ENCODE measurements at regions of chr6 and their contacts with region 1.

Region 1: DNA sequence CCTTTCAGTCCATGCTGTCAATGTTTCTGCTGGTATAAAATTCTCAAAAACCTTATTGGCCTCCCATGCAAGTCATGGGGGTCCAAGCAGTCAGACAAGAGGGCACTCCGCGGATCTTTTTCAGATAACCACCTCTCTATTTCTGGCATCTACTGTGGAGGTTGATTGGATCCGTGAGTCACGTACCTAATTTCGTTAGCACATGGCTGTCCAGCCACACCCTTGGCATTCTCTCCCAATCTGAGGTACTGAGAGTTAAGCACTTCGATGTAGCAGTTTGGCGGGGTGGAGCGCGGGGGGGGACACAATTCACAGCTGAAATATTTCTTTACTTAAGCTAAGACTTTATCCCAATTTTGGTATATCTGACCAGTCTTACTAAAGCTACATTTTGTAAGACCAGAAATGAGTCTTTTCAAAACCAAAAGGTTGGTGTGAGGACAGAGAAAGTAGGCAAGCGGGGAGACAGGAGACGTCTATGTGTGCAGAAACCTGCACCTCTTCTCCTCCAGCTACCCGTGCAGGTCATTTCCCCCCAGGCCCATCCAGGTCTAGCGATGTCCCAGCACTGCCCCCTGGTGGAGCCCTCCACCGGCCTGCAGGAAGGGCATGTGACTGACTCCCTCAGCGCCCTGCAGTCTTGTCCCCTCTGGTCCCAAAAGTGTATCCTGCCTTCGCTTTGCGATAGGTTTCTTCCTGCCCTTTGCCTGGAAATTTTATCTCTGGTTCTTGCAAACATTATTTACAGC is 113.1 kb downstream of the ADAT2 start:
- DNase-seq: peak; percentile 93
- H3K4me3 Mint-ChIP-seq: peak overlapping the region; percentile 46
- H3K27ac Mint-ChIP-seq: peak overlapping the region; percentile 99
- H3K4me1 Mint-ChIP-seq: peaks cover 40% of the 10 kb centered on the region
- H3K27me3 Mint-ChIP-seq: no peaks in the 10 kb centered on the region
- CTCF ChIP-seq: peak; percentile 86

Region 2: GRCh38 chr6:142692942-142693341 is 644.4 kb before region 1 on chr6:
- CTCF ChIA-PET with region 1: interaction called, 3 read pairs
- POLR2A ChIA-PET with region 1: interaction called, 6 read pairs
- intact Hi-C with region 1: loop called (anchors 1 kb)
- DNase-seq: peak; percentile 82
- H3K4me3 Mint-ChIP-seq: no peak overlapping the region
- H3K27ac Mint-ChIP-seq: no peak overlapping the region
- H3K4me1 Mint-ChIP-seq: peaks cover 43% of the 10 kb centered on the region
- H3K27me3 Mint-ChIP-seq: no peaks in the 10 kb centered on the region
- CTCF ChIP-seq: peak; percentile 85

Region 3: DNA sequence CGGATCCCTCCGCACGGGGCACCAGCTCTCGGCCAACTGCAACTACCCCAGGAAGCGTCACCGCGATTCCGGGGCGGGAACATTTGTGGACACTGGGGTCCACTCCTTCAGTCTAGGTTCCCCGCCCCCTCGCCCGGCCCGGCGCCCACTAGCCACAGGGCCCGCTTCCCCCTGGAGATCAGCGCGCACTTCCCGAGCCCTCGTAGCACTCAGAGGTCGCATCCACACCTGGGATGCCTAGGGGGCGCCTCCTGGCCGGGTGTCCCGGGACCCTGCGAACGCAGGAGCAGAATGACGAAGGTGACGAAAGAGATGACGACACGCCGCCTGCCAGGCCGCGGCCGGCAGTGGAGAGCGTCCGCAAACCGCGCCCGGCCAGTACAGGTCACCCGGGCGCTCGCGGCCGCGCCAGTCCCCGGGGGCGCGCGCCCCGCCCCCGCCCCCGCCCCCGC is 277.0 kb before region 1 on chr6:
- CTCF ChIA-PET with region 1: interaction called, 4 read pairs
- POLR2A ChIA-PET with region 1: interaction called, 132 read pairs
- intact Hi-C with region 1: loop called (anchors 2 kb)
- DNase-seq: peak; percentile 90
- H3K4me3 Mint-ChIP-seq: peak overlapping the region; percentile 94
- H3K27ac Mint-ChIP-seq: peak overlapping the region; percentile 97
- H3K4me1 Mint-ChIP-seq: peaks cover 37% of the 10 kb centered on the region
- H3K27me3 Mint-ChIP-seq: no peaks in the 10 kb centered on the region
- CTCF ChIP-seq: no peak

Region 4: GRCh38 chr6:143270026-143270425 is 67.3 kb before region 1 on chr6:
- CTCF ChIA-PET with region 1: interaction called, 7 read pairs
- POLR2A ChIA-PET with region 1: interaction called, 18 read pairs
- intact Hi-C with region 1: no loop called
- DNase-seq: no peak
- H3K4me3 Mint-ChIP-seq: no peak overlapping the region
- H3K27ac Mint-ChIP-seq: no peak overlapping the region
- H3K4me1 Mint-ChIP-seq: peaks cover 11% of the 10 kb centered on the region
- H3K27me3 Mint-ChIP-seq: no peaks in the 10 kb centered on the region
- CTCF ChIP-seq: no peak

Region 5: GRCh38 chr6:143397229-143398222 is 60.2 kb after region 1 on chr6:
- CTCF ChIA-PET with region 1: interaction called, 22 read pairs
- POLR2A ChIA-PET with region 1: interaction called, 402 read pairs
- intact Hi-C with region 1: loop called (anchors 1 kb)
- DNase-seq: peak; percentile 99
- H3K4me3 Mint-ChIP-seq: peak overlapping the region; percentile 24
- H3K27ac Mint-ChIP-seq: peak overlapping the region; percentile 100
- H3K4me1 Mint-ChIP-seq: peaks cover 73% of the 10 kb centered on the region
- H3K27me3 Mint-ChIP-seq: no peaks in the 10 kb centered on the region
- CTCF ChIP-seq: no peak

Region 6: GRCh38 chr6:143427109-143427817 is 89.9 kb after region 1 on chr6:
- CTCF ChIA-PET with region 1: interaction called, 57 read pairs
- POLR2A ChIA-PET with region 1: interaction called, 55 read pairs
- intact Hi-C with region 1: loop called (anchors 1 kb)
- DNase-seq: peak; percentile 78
- H3K4me3 Mint-ChIP-seq: no peak overlapping the region
- H3K27ac Mint-ChIP-seq: peak overlapping the region; percentile 84
- H3K4me1 Mint-ChIP-seq: peaks cover 11% of the 10 kb centered on the region
- H3K27me3 Mint-ChIP-seq: no peaks in the 10 kb centered on the region
- CTCF ChIP-seq: peak; percentile 98